H1 (cell line): ENCODE measurements at regions of chr10 and their contacts with region 1.

Region 1: DNA sequence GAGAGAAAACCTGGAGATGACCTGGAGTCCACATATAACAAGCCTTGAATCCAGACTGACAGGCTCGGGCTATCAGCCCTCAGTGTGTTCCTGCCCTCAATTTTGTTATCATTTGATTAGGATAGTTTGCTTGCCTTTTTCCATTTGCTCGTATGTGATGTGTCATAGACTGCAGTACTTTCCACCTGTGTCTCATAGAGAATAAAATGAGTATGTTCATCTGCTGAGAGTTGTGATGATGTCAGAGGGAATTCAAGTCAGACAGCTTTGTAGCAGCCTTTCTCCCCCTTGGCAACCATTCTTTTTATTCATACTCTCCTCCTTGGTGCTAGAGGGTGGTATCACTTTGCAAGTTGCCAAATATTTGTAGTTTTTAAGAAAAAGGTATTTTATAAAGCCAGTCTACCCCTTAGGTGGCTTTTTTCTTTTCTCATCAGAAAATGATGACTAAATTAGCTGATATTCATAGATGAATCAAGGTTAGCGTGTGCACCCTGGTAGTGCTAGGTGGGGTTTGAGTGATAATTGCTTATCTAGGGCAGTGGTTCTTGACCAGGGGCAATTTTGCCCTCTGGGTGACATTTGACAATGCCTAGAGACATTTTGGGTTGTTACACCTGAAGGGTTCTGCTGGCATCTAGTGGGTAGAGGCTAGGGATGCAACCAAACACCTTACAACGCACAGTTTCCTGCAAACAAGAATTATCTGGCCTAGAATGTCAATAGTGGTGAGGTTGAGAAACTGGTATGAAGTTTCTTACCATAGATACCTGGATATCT is 5.4 kb downstream of the SGPL1 start:
- DNase-seq: no peak
- H3K4me3 ChIP-seq: no peak overlapping the region
- H3K27ac ChIP-seq: no peak overlapping the region
- H3K4me1 ChIP-seq: no peaks in the 10 kb centered on the region
- H3K27me3 ChIP-seq: no peaks in the 10 kb centered on the region
- CTCF ChIP-seq: peak in 2 of 3 experiments; percentile 41 to 44; a peak in 3 of 4 replicates
- EP300 ChIP-seq: no peak
- POLR2A ChIP-seq: no peak
- RAD21 ChIP-seq: peak; percentile 60 to 69

Region 2: GRCh38 chr10:70575874-70576802 is 245.0 kb before region 1 on chr10:
- CTCF ChIA-PET with region 1: no interaction called
- POLR2A ChIA-PET with region 1: no interaction called
- DNase-seq: no peak
- H3K4me3 ChIP-seq: no peak overlapping the region
- H3K27ac ChIP-seq: no peak overlapping the region
- H3K4me1 ChIP-seq: no peaks in the 10 kb centered on the region
- H3K27me3 ChIP-seq: no peaks in the 10 kb centered on the region
- CTCF ChIP-seq: no peak
- EP300 ChIP-seq: no peak
- POLR2A ChIP-seq: no peak
- RAD21 ChIP-seq: no peak

Region 3: DNA sequence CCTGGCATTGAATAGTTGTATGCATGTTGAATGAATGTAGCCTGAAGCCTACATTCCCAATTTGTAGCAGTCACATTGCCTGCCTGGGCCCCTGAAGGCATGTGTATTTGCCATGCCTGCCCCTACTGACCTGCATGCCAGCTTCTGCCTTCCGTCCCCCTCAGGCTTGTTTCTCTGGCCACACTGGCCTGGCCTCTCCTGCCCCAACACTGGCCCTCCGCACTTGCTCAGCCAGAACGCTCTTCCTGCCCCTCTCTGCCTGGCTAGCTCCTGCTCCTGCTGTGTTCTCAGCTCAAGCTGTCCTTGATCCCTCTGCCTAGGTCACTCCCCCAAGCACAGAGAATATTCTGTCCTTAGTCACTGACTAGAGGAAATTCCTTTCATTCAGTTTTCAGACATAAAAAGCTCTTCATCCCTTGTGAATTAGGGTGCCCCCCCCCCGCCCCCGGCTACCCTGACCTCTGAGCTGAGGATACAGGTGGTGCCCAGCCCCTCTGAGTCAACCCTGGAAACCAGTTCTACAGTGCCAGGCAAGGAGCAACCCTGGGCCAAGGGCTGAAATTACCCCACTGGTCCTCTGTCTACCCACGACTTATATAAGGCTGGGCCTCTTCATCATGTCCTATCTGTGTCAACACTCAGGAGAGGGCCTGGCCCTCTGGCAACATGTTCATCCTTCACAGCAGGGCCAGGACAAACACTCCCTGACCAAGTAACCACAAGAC is 12.1 kb before region 1 on chr10:
- CTCF ChIA-PET with region 1: interaction called, 14 read pairs
- POLR2A ChIA-PET with region 1: no interaction called
- DNase-seq: no peak
- H3K4me3 ChIP-seq: no peak overlapping the region
- H3K27ac ChIP-seq: no peak overlapping the region
- H3K4me1 ChIP-seq: peaks cover 0 to 5% (median under 1%) of the 10 kb centered on the region in 4 experiments; a peak in 3 of 7 replicates
- H3K27me3 ChIP-seq: no peaks in the 10 kb centered on the region; a peak in 1 of 7 replicates
- CTCF ChIP-seq: no peak
- EP300 ChIP-seq: no peak
- POLR2A ChIP-seq: no peak
- RAD21 ChIP-seq: no peak

Region 4: DNA sequence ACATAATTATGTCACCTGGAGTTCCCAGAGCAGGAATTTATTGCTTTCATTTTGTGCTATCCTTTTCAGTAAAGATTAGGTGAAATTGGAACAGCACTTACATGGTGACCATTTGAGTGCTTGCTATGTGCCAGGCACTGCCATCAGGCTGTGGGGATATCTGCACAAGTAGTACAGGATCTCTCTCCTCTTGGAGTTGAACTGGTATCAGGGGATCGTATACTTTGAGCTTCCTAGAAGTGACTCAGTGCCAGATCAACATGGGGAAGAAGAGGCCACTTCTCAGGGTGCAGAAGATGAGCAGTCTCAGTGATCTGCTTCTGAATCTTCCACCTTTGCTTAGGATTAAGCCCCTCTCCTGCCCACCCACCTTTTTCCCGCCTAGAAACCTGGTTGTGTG is 24.1 kb after region 1 on chr10:
- CTCF ChIA-PET with region 1: no interaction called
- POLR2A ChIA-PET with region 1: no interaction called
- DNase-seq: no peak
- H3K4me3 ChIP-seq: no peak overlapping the region
- H3K27ac ChIP-seq: no peak overlapping the region
- H3K4me1 ChIP-seq: no peaks in the 10 kb centered on the region
- H3K27me3 ChIP-seq: no peaks in the 10 kb centered on the region
- CTCF ChIP-seq: no peak
- EP300 ChIP-seq: no peak
- POLR2A ChIP-seq: no peak
- RAD21 ChIP-seq: no peak

Region 5: DNA sequence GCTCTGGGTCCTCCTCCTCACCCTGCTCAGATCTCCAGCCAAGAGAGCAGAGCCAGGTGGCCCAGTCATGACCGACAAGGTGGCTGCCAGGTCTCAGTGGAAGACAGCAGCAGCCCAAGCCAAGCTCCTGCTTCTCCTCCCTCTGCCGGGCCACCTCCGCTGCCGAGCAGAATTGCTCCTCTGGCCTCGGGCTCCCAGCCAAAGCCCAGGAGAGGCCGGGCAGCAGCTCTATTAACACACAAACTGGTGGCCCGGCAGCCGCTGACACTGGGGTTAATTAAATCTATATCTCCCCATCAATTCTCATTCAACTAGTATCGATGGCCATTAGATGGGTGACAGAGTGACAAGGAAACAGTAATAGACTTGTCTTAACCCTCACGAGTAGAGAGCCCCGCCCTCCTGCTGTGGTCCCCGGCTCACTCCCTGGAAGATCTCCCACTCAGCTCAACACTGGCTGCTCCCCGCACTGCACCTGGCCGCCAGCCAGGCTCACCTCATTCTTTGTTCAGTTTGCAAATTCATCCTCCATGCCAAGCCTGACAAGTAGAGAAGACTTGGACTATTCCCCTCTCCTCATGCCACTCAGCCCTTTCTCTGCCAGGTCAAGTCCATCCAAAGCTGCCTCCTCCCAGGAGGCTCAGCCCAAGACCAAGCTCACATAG is 317.1 kb after region 1 on chr10:
- CTCF ChIA-PET with region 1: no interaction called
- POLR2A ChIA-PET with region 1: no interaction called
- DNase-seq: no peak
- H3K4me3 ChIP-seq: no peak overlapping the region
- H3K27ac ChIP-seq: no peak overlapping the region
- H3K4me1 ChIP-seq: peaks cover 2 to 11% (median 6%) of the 10 kb centered on the region in 4 experiments
- H3K27me3 ChIP-seq: no peaks in the 10 kb centered on the region; a peak in 1 of 7 replicates
- CTCF ChIP-seq: no peak
- EP300 ChIP-seq: no peak
- POLR2A ChIP-seq: no peak
- RAD21 ChIP-seq: no peak